Vagina (tissue), 2 donors: ENCODE measurements at regions of chr13 and their contacts with region 1.

Region 1: GRCh38 chr13:110412132-110412914 is 105.2 kb downstream of the COL4A2 start:
- DNase-seq: peak in 1 of 2 donors; percentile 99
- H3K4me3 ChIP-seq: no peak overlapping the region
- H3K27ac ChIP-seq: peak overlapping the region; percentile 87
- H3K4me1 ChIP-seq: peaks cover 74% of the 10 kb centered on the region
- H3K27me3 ChIP-seq: no peaks in the 10 kb centered on the region
- CTCF ChIP-seq: peak; percentile 75 to 89 (median 82)
- POLR2A ChIP-seq: no peak

Region 2: GRCh38 chr13:110220471-110220870 is 191.9 kb before region 1 on chr13:
- intact Hi-C with region 1: loop called (anchors 5 kb)
- DNase-seq: peak in 1 of 2 donors; percentile 84
- H3K4me3 ChIP-seq: no peak overlapping the region
- H3K27ac ChIP-seq: peak overlapping the region; percentile 2
- H3K4me1 ChIP-seq: peaks cover 28% of the 10 kb centered on the region
- H3K27me3 ChIP-seq: no peaks in the 10 kb centered on the region
- CTCF ChIP-seq: no peak
- POLR2A ChIP-seq: no peak

Region 3: GRCh38 chr13:110239280-110240125 is 172.8 kb before region 1 on chr13:
- intact Hi-C with region 1: loop called (anchors 5 kb)
- DNase-seq: peak in 1 of 2 donors; percentile 47
- H3K4me3 ChIP-seq: no peak overlapping the region
- H3K27ac ChIP-seq: peak overlapping the region; percentile 37
- H3K4me1 ChIP-seq: peaks cover 48% of the 10 kb centered on the region
- H3K27me3 ChIP-seq: no peaks in the 10 kb centered on the region
- CTCF ChIP-seq: no peak
- POLR2A ChIP-seq: no peak

Region 4: GRCh38 chr13:110306960-110307746 is 105.2 kb before region 1 on chr13 and contains the starts of genes COL4A1 and COL4A2:
- intact Hi-C with region 1: loop called (anchors 1 kb)
- DNase-seq: peak in 1 of 2 donors; percentile 87
- H3K4me3 ChIP-seq: peak within 1 kb of the TSS; percentile 66 to 84
- H3K27ac ChIP-seq: peak within 1 kb of the TSS; percentile 95
- H3K4me1 ChIP-seq: peaks cover 49% of the 10 kb centered on the region
- H3K27me3 ChIP-seq: no peaks in the 10 kb centered on the region
- CTCF ChIP-seq: no peak
- POLR2A ChIP-seq: peak; percentile 63 to 95
- total RNA-seq, gene COL4A1: 178 TPM
- total RNA-seq, gene COL4A2: 180 TPM

Region 5: DNA sequence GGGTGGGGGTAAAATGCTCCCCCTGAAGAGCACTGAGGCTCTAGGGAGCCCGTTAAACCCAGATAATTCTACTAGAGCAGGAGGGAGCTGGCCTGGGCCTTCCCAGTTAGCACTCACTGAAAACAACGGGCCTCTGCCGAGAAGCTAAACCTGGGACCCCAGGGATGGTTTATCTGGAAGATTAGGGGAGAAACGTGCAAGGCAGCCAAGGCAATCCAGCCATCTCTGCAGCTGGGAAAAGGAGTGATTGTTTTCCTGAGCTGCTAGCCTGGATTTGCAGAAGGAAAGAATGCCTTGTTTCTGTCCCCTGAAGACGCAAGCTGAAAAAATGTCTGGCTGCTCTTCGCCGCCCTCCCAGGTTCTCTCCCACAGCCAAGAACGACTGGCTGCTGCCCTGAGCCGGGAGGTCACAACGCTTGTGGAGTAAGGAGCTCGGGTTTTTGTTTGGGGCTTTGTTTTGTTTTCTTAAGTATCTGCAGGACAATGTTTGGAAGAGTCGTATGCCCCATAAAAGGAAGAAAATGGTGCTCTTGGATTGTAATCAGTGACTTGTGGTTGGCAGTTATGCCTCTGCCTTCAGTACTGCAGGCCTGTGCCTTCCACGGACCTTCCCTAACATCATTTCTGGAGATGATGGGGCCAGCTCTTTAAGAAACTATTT is 73.8 kb before region 1 on chr13:
- intact Hi-C with region 1: loop called (anchors 10 kb)
- DNase-seq: no peak
- H3K4me3 ChIP-seq: peak overlapping the region in 1 of 2 donors; percentile 4
- H3K27ac ChIP-seq: peak overlapping the region; percentile 87
- H3K4me1 ChIP-seq: peaks cover 69% of the 10 kb centered on the region
- H3K27me3 ChIP-seq: no peaks in the 10 kb centered on the region
- CTCF ChIP-seq: no peak
- POLR2A ChIP-seq: no peak